ENCODE measurements at regions of chr13 and their contacts with region 1.

Region 1: DNA sequence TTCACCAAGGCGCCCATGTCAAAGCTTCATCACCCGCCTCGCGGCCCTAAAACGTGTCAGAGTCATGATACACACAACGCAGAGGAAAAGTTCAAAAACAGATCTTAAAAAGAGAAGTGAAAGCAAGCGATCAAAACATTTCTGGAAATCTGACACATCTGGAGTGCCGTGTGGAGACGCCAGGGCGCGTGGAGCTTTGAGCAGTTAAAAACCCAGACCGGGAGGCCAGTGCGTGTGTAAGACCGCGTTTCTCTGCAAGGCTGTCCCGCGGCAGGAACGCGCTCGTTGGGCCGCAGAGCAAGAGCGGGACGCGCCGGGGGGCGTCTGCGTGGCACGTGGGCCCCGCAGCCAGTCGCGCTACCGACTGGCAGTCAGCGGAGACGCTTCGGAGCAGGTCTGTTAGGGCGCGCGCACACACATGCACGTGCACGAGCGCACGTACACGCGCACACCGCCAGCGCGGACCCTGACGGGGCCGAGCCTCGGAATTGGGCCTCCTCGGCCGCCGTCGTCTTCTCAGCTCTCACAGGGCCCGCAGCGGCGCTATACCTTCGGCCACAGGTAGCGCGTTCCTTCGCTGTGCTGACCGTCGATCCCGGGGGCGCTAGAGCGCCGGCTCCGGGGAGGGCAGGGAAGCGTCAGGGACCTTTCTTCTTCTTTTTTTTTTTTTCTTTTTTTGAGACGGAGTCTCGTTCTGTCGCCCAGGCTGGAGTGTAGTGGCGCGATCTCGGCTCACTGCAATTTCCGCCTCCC is 35.8 kb downstream of the RNF6 start:
- DNase-seq: peak; percentile 89
- H3K4me3 Mint-ChIP-seq: peak overlapping the region; percentile 82
- H3K27ac Mint-ChIP-seq: peak overlapping the region; percentile 96
- H3K4me1 Mint-ChIP-seq: peaks cover 22% of the 10 kb centered on the region
- H3K27me3 Mint-ChIP-seq: no peaks in the 10 kb centered on the region

Region 2: GRCh38 chr13:26221721-26222519 is 35.6 kb after region 1 on chr13 and contains the start of gene RNF6:
- CTCF ChIA-PET with region 1: interaction called, 26 read pairs
- POLR2A ChIA-PET with region 1: interaction called, 4 read pairs
- DNase-seq: peak; percentile 92
- H3K4me3 Mint-ChIP-seq: peak within 1 kb of the TSS; percentile 89
- H3K27ac Mint-ChIP-seq: peak within 1 kb of the TSS; percentile 100
- H3K4me1 Mint-ChIP-seq: peaks cover 32% of the 10 kb centered on the region
- H3K27me3 Mint-ChIP-seq: no peaks in the 10 kb centered on the region
- total RNA-seq, gene RNF6: 38.7 to 46.0 TPM

Region 3: GRCh38 chr13:26502826-26503225 is 316.5 kb after region 1 on chr13:
- CTCF ChIA-PET with region 1: interaction called, 42 read pairs
- POLR2A ChIA-PET with region 1: no interaction called
- DNase-seq: peak; percentile 14
- H3K4me3 Mint-ChIP-seq: no peak overlapping the region
- H3K27ac Mint-ChIP-seq: peak overlapping the region; percentile 15
- H3K4me1 Mint-ChIP-seq: peaks cover 12% of the 10 kb centered on the region
- H3K27me3 Mint-ChIP-seq: no peaks in the 10 kb centered on the region

Region 4: DNA sequence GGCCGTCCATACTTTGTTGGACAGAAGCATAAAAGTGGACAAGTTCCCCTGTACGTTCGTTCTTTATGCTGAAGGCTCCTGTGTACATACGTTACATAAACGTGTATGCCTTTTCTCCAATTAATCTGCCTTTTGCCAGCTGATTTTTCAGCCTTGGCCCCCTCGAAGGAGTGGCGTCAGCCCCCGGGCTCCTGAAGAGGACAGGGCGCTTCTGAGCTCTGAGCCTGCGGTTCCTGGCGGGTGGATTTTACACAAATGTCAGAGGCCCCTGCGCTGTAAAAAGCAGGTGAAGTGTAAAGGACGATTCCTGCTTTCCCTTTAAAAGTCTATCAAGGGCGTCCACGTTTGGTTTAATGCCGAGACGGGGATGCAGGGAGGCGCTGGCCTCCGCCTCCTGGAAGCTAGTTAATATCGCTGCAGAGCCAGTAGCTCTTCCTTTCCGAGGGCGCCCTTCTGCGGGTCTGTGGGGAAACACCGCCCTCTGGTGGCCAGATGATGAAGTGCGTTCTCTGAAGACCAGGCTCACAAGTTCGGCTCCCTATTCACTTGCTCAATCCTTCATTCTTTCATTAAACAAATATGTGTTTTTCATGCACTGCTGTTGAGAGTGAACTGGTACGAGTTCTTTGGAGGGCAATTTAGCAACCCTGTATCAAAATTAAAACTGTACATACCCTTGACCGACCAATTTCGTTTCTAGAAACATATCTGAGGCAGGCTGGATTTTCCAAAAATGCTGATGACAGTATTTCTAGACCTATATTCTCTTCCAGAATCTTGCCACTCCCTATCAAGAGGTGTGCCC is 512.3 kb after region 1 on chr13:
- CTCF ChIA-PET with region 1: interaction called, 13 read pairs
- POLR2A ChIA-PET with region 1: no interaction called
- DNase-seq: peak; percentile 77
- H3K4me3 Mint-ChIP-seq: no peak overlapping the region
- H3K27ac Mint-ChIP-seq: no peak overlapping the region
- H3K4me1 Mint-ChIP-seq: peaks cover 5% of the 10 kb centered on the region
- H3K27me3 Mint-ChIP-seq: peaks cover 4% of the 10 kb centered on the region

Measured in activated CD4-positive, alpha-beta T cell treated with anti-CD3 and anti-CD28 coated beads, Interleukin-2, amount 10 ng/mL, durations not matched to agents 7 days and 5 days (primary cell).